ENCODE measurements at regions of chr9 and their contacts with region 1.

Region 1: DNA sequence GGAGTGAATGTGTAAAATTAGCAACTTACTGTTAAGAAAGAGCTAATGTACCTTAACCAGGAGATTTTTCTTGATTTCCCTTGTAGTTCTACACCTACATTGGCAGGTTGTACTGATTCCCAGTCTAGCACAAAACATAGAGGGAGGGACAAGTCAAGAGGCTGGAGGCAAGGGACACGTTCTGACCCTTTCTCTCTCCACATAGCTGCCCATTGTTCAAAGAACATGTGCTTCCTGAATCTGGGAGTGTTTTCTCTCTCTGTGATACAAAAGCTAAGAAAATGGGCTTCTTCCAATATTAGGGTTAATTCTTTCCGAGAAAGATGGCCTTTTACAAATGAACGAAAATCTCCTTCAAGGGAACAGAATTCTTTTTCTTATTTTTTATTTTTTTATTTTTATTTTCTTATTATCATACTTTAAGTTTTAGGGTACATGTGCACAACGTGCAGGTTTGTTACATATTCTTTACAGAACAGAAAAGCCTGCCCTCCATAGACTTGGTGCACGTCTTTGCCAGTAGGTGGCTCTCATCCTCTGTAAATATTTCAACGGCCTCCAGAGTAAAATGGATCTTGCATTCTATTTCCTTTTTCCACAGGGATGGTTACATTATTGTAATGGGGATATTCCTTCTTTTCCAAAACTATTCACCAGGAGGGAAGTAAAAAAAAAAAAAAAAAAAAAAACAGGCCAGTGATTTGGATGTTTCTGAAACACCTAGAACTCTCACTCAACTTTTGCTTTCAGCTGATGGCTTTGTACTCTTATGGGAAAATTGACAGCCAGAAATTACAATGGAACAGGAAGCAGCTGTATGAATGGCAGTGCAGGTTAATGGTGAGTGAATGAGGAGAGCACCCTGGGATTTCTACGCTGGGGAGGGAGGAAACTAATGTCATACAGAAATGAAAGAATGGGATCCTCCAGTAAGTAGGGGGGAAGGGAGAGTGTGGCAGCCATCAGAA is 13.1 kb upstream of the IFNA5 start:
- DNase-seq: no peak
- ATAC-seq: peak; percentile 94
- H3K4me3 ChIP-seq: no peak overlapping the region
- H3K27ac ChIP-seq: no peak overlapping the region
- H3K4me1 ChIP-seq: no peaks in the 10 kb centered on the region
- H3K27me3 ChIP-seq: no peaks in the 10 kb centered on the region
- CTCF ChIP-seq: peak; percentile 59 to 74 (median 66)
- EP300 ChIP-seq: no peak
- POLR2A ChIP-seq: no peak
- RAD21 ChIP-seq: peak; percentile 82

Region 2: DNA sequence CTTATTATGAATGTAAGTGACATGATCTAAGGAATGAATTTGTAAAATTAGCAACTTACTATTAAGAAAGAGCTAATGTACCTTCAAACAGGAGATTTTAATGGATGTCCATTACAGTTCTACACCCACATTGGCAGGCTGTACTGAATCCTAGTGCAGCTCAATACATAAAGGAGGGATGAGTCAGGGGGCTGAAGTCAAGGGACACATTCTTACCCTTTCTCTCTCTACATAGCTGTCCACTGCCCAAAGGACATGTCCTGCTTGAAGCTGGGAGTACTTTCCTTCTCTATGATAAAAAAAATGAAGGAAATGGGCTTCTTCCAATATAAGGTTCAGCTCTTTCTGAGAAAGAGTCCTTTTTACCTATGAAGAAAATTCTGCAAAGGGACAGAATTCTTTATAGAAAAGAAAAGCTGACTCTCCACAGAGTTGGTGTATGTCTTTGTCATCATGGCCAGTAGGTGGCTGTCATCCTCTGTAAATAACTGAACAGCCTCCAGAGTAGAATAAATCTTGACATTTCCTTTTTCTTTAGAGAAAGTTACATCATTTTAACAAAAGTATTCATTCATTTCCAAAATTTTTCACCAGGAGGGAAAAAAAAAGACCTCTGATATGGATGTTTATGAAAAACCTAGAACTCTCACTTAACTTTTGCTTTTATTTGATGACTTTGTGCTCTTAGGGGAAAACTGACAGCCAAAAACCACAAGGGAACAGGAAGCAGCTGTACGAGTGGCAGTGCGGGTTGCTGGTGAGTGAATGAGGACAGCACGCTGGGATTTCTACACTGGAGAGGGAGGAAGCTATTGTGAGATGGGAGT is 65.3 kb before region 1 on chr9:
- CTCF ChIA-PET with region 1: interaction called, 25 read pairs
- POLR2A ChIA-PET with region 1: no interaction called
- RAD21 ChIA-PET with region 1: interaction called, 20 read pairs
- SMC1A ChIA-PET with region 1: interaction called, 19 read pairs
- in situ Hi-C with region 1: no loop called
- intact Hi-C with region 1: loop called (anchors 5 kb)
- DNase-seq: no peak
- ATAC-seq: peak; percentile 91
- H3K4me3 ChIP-seq: no peak overlapping the region
- H3K27ac ChIP-seq: no peak overlapping the region
- H3K4me1 ChIP-seq: no peaks in the 10 kb centered on the region
- H3K27me3 ChIP-seq: no peaks in the 10 kb centered on the region; a peak in 3 of 4 replicates
- CTCF ChIP-seq: peak; percentile 60 to 63 (median 62)
- EP300 ChIP-seq: no peak
- POLR2A ChIP-seq: no peak
- RAD21 ChIP-seq: peak; percentile 62

Region 3: GRCh38 chr9:21395778-21396717 is 77.8 kb after region 1 on chr9:
- CTCF ChIA-PET with region 1: interaction called, 168 read pairs
- POLR2A ChIA-PET with region 1: interaction called, 3 read pairs
- RAD21 ChIA-PET with region 1: interaction called, 86 read pairs
- SMC1A ChIA-PET with region 1: interaction called, 116 read pairs
- in situ Hi-C with region 1: no loop called
- intact Hi-C with region 1: no loop called
- DNase-seq: no peak
- ATAC-seq: peak; percentile 82
- H3K4me3 ChIP-seq: peak overlapping the region; percentile 68
- H3K27ac ChIP-seq: no peak overlapping the region
- H3K4me1 ChIP-seq: peaks cover 3% of the 10 kb centered on the region; the same call in 1 of the 2 replicates
- H3K27me3 ChIP-seq: no peaks in the 10 kb centered on the region
- CTCF ChIP-seq: peak; percentile 71 to 88 (median 85)
- EP300 ChIP-seq: no peak
- POLR2A ChIP-seq: no peak
- RAD21 ChIP-seq: peak; percentile 57

Region 4: DNA sequence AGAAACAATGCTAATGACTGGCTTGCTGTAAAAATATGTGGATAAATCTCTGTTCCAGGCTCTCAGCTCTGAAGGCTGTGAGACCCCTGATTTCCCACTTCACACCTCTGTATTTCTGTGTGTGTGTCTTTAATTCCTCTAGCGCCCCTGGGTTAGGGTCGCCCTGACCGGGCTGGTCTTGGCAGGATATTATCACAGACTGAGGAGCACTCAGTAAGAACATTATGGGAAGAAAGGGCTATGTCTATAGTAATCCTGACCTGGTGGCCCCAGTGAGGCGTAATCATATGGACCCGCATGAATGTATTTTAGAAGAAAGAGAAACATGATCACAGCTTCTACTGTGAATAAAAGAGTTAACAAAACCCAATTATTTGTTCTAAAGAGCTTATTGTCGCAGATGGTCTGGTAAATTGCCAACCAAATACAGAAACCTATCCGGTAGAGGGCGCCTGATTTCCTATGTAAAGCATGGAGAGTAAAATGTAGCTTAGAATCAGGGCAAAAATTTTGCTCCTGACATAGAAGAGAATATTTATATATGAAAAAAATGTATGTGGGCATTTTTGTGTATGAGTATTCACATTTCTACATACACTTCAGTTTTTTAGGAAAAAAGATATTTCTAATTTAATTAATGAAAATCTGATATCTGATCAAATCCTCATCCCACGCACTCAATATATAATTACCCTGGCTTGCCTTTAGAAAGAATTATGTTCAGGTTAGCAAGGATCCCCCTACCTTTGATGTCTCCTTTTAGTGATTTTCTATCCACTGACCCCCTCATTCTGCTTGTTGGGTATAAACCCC is 116.2 kb after region 1 on chr9:
- CTCF ChIA-PET with region 1: interaction called, 31 read pairs
- POLR2A ChIA-PET with region 1: no interaction called
- RAD21 ChIA-PET with region 1: interaction called, 5 read pairs
- SMC1A ChIA-PET with region 1: interaction called, 4 read pairs
- in situ Hi-C with region 1: no loop called
- intact Hi-C with region 1: no loop called
- DNase-seq: no peak
- ATAC-seq: peak; percentile 47; the same call in 1 of the 3 replicates
- H3K4me3 ChIP-seq: no peak overlapping the region
- H3K27ac ChIP-seq: no peak overlapping the region
- H3K4me1 ChIP-seq: peaks cover 6% of the 10 kb centered on the region; the same call in 1 of the 2 replicates
- H3K27me3 ChIP-seq: no peaks in the 10 kb centered on the region
- CTCF ChIP-seq: peak; percentile 46 to 51 (median 49); a peak in 5 of 6 replicates
- EP300 ChIP-seq: no peak
- POLR2A ChIP-seq: no peak
- RAD21 ChIP-seq: peak; percentile 38

Region 5: DNA sequence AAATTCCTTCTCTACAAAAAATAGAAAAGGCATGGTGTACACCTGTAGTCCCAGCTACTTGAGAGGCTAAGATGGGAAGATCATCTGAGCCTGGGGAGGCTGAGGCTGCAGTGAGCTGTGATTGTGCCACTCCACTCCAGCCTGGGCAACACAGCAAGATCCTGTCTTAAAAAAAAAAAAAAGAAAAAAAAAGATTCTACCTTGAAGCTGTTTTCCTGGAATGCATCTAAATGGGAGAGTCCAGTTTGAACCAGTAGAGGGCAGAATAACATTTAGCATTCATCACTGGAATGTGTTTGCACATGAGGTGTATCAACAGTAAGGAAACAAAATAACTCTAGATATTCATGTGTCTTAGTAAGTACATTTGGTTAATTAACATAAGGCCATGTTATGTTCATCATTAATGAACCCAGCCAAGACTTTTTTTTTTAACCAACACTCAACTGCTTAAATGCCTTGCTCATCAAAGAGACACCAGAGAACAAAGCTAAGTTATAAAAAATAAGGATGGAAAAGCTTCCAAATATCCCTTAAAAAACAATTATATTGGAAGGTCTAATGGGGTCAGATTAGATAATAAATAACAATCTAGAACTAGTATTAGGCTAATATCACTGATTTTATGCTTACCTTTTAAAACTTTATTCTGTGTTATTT is 147.7 kb after region 1 on chr9:
- CTCF ChIA-PET with region 1: interaction called, 10 read pairs
- POLR2A ChIA-PET with region 1: no interaction called
- RAD21 ChIA-PET with region 1: no interaction called
- SMC1A ChIA-PET with region 1: interaction called, 4 read pairs
- in situ Hi-C with region 1: no loop called
- intact Hi-C with region 1: no loop called
- DNase-seq: no peak
- ATAC-seq: peak; percentile 83
- H3K4me3 ChIP-seq: no peak overlapping the region
- H3K27ac ChIP-seq: no peak overlapping the region
- H3K4me1 ChIP-seq: no peaks in the 10 kb centered on the region
- H3K27me3 ChIP-seq: no peaks in the 10 kb centered on the region
- CTCF ChIP-seq: peak; percentile 60 to 68 (median 66); a peak in 5 of 6 replicates
- EP300 ChIP-seq: no peak
- POLR2A ChIP-seq: no peak
- RAD21 ChIP-seq: peak; percentile 81

Region 6: GRCh38 chr9:21576331-21577189 is 258.3 kb after region 1 on chr9:
- CTCF ChIA-PET with region 1: no interaction called
- POLR2A ChIA-PET with region 1: no interaction called
- RAD21 ChIA-PET with region 1: no interaction called
- SMC1A ChIA-PET with region 1: no interaction called
- in situ Hi-C with region 1: no loop called
- intact Hi-C with region 1: no loop called
- DNase-seq: peak; percentile 20
- ATAC-seq: peak; percentile 89
- H3K4me3 ChIP-seq: no peak overlapping the region
- H3K27ac ChIP-seq: no peak overlapping the region
- H3K4me1 ChIP-seq: peaks cover 4% of the 10 kb centered on the region; the same call in 1 of the 2 replicates
- H3K27me3 ChIP-seq: no peaks in the 10 kb centered on the region
- CTCF ChIP-seq: no peak
- EP300 ChIP-seq: no peak
- POLR2A ChIP-seq: no peak
- RAD21 ChIP-seq: no peak

Region 7: DNA sequence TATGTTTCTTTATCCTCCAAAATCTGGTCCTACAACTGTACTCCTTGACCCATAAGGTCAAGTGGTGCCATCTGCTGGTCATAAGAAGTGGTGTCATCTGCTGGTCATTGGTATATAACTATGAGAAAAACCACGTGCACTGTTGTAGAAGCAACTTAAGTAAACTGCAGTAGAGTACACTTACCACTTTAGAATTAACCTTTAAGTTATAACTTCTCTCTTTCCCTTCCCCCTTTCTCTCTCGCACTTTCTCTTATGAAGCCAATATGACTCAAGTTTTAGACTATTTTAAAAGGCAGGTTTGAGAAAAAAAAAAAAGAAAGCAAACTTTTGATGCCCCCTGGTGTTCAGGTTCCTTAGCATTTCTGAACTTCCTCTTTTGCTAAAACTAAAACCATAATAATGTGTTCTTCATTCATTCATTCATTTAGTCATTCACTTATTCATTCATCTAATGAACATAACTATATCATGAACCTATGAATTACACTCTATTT is 471.3 kb after region 1 on chr9:
- CTCF ChIA-PET with region 1: interaction called, 7 read pairs
- POLR2A ChIA-PET with region 1: no interaction called
- RAD21 ChIA-PET with region 1: no interaction called
- SMC1A ChIA-PET with region 1: no interaction called
- in situ Hi-C with region 1: no loop called
- intact Hi-C with region 1: loop called (anchors 2 kb)
- DNase-seq: peak; percentile 40
- ATAC-seq: peak; percentile 100
- H3K4me3 ChIP-seq: no peak overlapping the region
- H3K27ac ChIP-seq: no peak overlapping the region
- H3K4me1 ChIP-seq: no peaks in the 10 kb centered on the region
- H3K27me3 ChIP-seq: peaks cover 0 to 5% of the 10 kb centered on the region in 2 experiments; a peak in 2 of 4 replicates
- CTCF ChIP-seq: peak; percentile 63 to 72 (median 66)
- EP300 ChIP-seq: no peak
- POLR2A ChIP-seq: no peak
- RAD21 ChIP-seq: peak; percentile 74

Region 8: GRCh38 chr9:22288661-22289060 is 970.4 kb after region 1 on chr9:
- CTCF ChIA-PET with region 1: no interaction called
- POLR2A ChIA-PET with region 1: no interaction called
- RAD21 ChIA-PET with region 1: no interaction called
- SMC1A ChIA-PET with region 1: no interaction called
- in situ Hi-C with region 1: no loop called
- intact Hi-C with region 1: no loop called
- DNase-seq: no peak
- ATAC-seq: no peak
- H3K4me3 ChIP-seq: no peak overlapping the region
- H3K27ac ChIP-seq: no peak overlapping the region
- H3K4me1 ChIP-seq: no peaks in the 10 kb centered on the region
- H3K27me3 ChIP-seq: no peaks in the 10 kb centered on the region
- CTCF ChIP-seq: no peak
- EP300 ChIP-seq: no peak
- POLR2A ChIP-seq: no peak
- RAD21 ChIP-seq: no peak